Head of caudate nucleus (tissue), 42 donors: ENCODE measurements at regions of chr22 and their contacts with region 1.

Region 1: DNA sequence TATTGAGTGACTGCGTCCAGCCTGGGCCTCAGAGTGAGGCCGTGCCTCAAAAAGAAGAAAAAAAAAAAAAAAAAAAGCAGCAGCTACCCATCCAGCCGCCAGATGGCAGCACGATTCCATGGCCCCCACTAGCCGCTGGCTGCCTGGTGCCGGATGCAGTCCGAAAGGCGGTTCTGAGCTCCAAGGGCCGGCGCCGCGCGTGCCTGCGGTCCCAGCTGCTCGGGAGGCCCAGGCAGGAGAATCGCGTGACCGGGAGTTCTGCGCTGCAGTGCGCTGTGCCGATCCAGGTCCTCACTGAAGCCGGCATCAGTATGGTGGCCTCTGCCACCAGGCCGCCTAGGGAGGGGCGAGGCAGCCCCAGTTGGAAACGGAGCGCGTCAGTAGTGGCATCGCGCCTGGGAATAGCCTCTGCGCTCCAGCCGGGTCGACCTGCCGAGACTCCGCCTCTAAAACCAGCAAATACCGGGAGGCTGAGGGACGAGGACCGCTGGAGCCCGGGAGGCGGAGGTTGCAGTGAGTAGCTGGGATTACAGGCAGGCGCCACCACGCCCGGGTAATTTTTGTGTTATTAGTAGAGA is 19.3 kb downstream of the SCARF2 start:
- DNase-seq: peak; percentile 38 to 92 (median 82)

Region 2: GRCh38 chr22:20456064-20456721 is 37.9 kb after region 1 on chr22:
- intact Hi-C with region 1: loop called (anchors 2 kb)
- DNase-seq: peak; percentile 66 to 90 (median 79)

Region 3: GRCh38 chr22:20495861-20496681 is 77.8 kb after region 1 on chr22:
- intact Hi-C with region 1: loop called (anchors 2 kb)
- DNase-seq: peak; percentile 64 to 98 (median 94)